ENCODE measurements at regions of chr3 and their contacts with region 1.

Region 1: DNA sequence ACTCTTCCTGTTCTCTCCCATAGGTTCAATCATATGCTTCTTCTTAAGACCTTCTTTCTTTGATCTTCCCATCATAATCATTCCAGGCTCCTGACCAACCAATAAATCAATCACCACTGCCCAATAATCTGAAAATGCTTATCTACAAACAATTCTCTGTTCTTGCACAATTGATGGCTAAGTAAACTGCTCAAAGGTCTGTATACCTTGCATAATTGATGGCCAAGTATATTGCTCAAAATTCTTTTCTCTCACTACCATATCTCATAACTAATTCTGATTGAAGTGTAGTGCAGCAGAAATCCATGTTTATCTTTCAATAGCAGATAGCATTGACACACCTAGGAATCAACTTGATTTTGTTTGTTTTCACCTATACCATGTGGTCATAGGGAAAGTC is 83.4 kb upstream of the EPHA6 start:
- DNase-seq: peak in 1 of 2 experiments; percentile 79
- H3K4me3 ChIP-seq: no peak overlapping the region
- H3K4me3 Mint-ChIP-seq: no peak overlapping the region
- H3K27ac Mint-ChIP-seq: no peak overlapping the region
- H3K4me1 ChIP-seq: peaks cover 34% of the 10 kb centered on the region
- H3K4me1 Mint-ChIP-seq: peaks cover 24% of the 10 kb centered on the region
- H3K27me3 ChIP-seq: no peaks in the 10 kb centered on the region
- H3K27me3 Mint-ChIP-seq: no peaks in the 10 kb centered on the region
- CTCF ChIP-seq: no peak

Region 2: DNA sequence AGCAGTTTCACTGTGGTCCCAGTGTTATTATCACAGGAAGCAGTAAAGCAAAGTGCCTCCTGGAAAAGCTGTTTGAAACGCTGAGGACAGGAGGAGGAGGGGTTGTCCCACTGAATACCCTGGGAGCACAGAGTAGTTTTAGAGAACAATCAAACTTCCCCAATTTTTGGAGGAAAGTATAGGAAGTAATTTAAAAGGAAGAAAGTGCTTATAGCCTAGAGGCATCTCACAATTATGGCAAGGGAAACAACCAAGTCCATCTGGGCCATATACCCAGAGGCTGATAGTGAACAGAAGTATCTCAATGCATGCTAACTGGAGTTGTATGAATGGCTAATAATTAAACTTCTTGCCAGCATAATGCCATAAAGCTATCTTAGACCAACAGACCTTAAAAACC is 53.9 kb before region 1 on chr3:
- CTCF ChIA-PET with region 1: no interaction called
- POLR2A ChIA-PET with region 1: no interaction called
- intact Hi-C with region 1: loop called (anchors 2 kb)
- DNase-seq: peak in 1 of 2 experiments; percentile 11
- H3K4me3 ChIP-seq: no peak overlapping the region
- H3K4me3 Mint-ChIP-seq: no peak overlapping the region
- H3K27ac Mint-ChIP-seq: no peak overlapping the region
- H3K4me1 ChIP-seq: peaks cover 14% of the 10 kb centered on the region; the same call in 1 of the 2 replicates
- H3K4me1 Mint-ChIP-seq: no peaks in the 10 kb centered on the region
- H3K27me3 ChIP-seq: no peaks in the 10 kb centered on the region
- H3K27me3 Mint-ChIP-seq: peaks cover 3% of the 10 kb centered on the region
- CTCF ChIP-seq: no peak

Region 3: DNA sequence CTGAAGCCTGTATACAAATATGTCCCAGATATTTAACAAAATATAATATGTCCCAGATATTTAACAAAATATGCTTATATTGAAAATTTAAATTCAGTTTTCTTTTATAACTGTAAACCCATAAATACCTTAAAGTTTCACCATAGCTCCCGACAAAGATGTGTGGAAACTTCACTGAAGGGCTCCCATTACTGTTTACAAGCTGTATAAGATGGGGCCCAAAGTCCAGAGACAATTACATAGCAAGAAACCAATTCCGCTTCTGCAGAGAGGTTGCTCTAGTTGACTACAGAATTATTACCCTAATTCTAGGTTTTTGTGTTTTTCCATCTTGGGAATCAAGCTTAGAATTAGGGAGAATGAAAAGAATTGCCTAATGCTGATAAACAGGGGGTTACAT is 19.2 kb before region 1 on chr3:
- CTCF ChIA-PET with region 1: no interaction called
- POLR2A ChIA-PET with region 1: no interaction called
- intact Hi-C with region 1: loop called (anchors 1 kb)
- DNase-seq: peak in 1 of 2 experiments; percentile 23
- H3K4me3 ChIP-seq: no peak overlapping the region
- H3K4me3 Mint-ChIP-seq: no peak overlapping the region
- H3K27ac Mint-ChIP-seq: no peak overlapping the region
- H3K4me1 ChIP-seq: 0 out of 2 replicates have a peak, but pooled peaks cover under 1% of the 10 kb centered on the region
- H3K4me1 Mint-ChIP-seq: no peaks in the 10 kb centered on the region
- H3K27me3 ChIP-seq: no peaks in the 10 kb centered on the region
- H3K27me3 Mint-ChIP-seq: no peaks in the 10 kb centered on the region
- CTCF ChIP-seq: no peak

Region 4: DNA sequence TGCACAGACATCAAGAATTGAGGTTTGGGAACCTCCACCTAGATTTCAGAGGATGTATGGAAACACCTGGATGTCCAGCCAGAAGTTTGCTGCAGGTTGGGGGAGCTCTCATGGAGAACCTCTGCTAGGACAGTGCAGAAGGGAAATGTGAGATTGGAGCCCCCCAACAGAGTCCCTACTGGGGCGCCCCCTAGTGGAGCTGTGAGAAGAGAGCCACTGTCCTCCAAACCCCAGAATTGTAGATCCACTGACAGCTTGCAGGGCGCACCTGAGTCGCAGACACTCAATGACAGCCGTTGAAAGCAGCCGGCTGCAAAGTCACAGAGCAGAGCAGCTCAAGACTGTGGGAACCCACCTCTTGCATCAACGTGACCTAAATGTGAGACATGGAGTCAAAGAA is 48.8 kb after region 1 on chr3:
- CTCF ChIA-PET with region 1: no interaction called
- POLR2A ChIA-PET with region 1: no interaction called
- intact Hi-C with region 1: loop called (anchors 2 kb)
- DNase-seq: no peak
- H3K4me3 ChIP-seq: no peak overlapping the region
- H3K4me3 Mint-ChIP-seq: no peak overlapping the region
- H3K27ac Mint-ChIP-seq: no peak overlapping the region
- H3K4me1 ChIP-seq: no peaks in the 10 kb centered on the region
- H3K4me1 Mint-ChIP-seq: no peaks in the 10 kb centered on the region
- H3K27me3 ChIP-seq: no peaks in the 10 kb centered on the region
- H3K27me3 Mint-ChIP-seq: no peaks in the 10 kb centered on the region
- CTCF ChIP-seq: no peak

Region 5: DNA sequence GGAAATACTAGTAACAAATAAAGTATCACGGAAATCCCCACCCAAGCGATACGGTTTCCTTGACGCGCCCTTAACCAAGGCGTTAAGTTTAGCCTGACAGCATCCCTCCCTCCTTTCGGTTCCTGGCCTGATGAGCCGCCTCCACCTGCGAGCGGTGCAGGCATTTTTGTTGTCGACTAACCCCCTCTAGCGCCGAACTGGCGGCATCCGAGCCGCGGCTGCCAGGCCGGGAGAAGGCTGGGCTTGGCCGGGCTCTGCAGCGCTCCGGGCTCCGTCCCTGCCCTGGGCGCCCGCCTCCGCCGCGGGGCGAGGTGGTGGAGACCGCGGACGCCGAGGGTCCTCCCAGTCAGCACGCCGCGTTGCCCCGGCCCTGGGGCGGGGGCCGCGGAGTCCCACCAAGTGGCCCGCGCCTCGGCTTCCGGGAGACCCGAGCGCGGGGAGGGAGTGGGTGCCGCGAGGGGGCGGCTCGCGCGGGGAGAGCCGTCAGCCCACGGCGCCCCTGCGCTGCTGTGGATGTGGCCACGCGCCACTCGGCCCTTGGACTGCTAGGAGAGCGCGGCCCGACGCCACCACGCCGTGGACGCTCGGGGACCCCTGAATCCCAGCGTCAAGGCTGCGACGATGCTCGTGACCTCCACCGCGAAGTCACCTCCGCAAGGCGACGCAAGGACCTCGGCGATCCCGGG is 82.2 kb after region 1 on chr3:
- CTCF ChIA-PET with region 1: no interaction called
- POLR2A ChIA-PET with region 1: no interaction called
- intact Hi-C with region 1: loop called (anchors 1 kb)
- DNase-seq: peak; percentile 83 to 90
- H3K4me3 ChIP-seq: peak overlapping the region; percentile 67
- H3K4me3 Mint-ChIP-seq: peak overlapping the region; percentile 76
- H3K27ac Mint-ChIP-seq: no peak overlapping the region
- H3K4me1 ChIP-seq: no peaks in the 10 kb centered on the region
- H3K4me1 Mint-ChIP-seq: peaks cover 7% of the 10 kb centered on the region
- H3K27me3 ChIP-seq: no peaks in the 10 kb centered on the region
- H3K27me3 Mint-ChIP-seq: no peaks in the 10 kb centered on the region
- CTCF ChIP-seq: peak; percentile 63 to 74